ENCODE measurements at regions of chr11 and their contacts with region 1.

Region 1: GRCh38 chr11:128302425-128303186 is 284.8 kb downstream of the ETS1 start:
- DNase-seq: peak; percentile 81
- H3K4me3 Mint-ChIP-seq: peak overlapping the region; percentile 79
- H3K27ac Mint-ChIP-seq: peak overlapping the region; percentile 94
- H3K4me1 Mint-ChIP-seq: peaks cover 78% of the 10 kb centered on the region
- H3K27me3 Mint-ChIP-seq: no peaks in the 10 kb centered on the region

Region 2: GRCh38 chr11:128246364-128246801 is 56.2 kb before region 1 on chr11:
- CTCF ChIA-PET with region 1: no interaction called
- POLR2A ChIA-PET with region 1: no interaction called
- intact Hi-C with region 1: no loop called
- DNase-seq: no peak
- H3K4me3 Mint-ChIP-seq: no peak overlapping the region
- H3K27ac Mint-ChIP-seq: no peak overlapping the region
- H3K4me1 Mint-ChIP-seq: no peaks in the 10 kb centered on the region
- H3K27me3 Mint-ChIP-seq: peaks cover 4% of the 10 kb centered on the region

Region 3: GRCh38 chr11:128365044-128365443 is 62.4 kb after region 1 on chr11:
- CTCF ChIA-PET with region 1: no interaction called
- POLR2A ChIA-PET with region 1: no interaction called
- intact Hi-C with region 1: no loop called
- DNase-seq: no peak
- H3K4me3 Mint-ChIP-seq: no peak overlapping the region
- H3K27ac Mint-ChIP-seq: no peak overlapping the region
- H3K4me1 Mint-ChIP-seq: peaks cover 27% of the 10 kb centered on the region
- H3K27me3 Mint-ChIP-seq: no peaks in the 10 kb centered on the region

Region 4: GRCh38 chr11:128375961-128376360 is 73.4 kb after region 1 on chr11:
- CTCF ChIA-PET with region 1: no interaction called
- POLR2A ChIA-PET with region 1: no interaction called
- intact Hi-C with region 1: no loop called
- DNase-seq: no peak
- H3K4me3 Mint-ChIP-seq: no peak overlapping the region
- H3K27ac Mint-ChIP-seq: no peak overlapping the region
- H3K4me1 Mint-ChIP-seq: peaks cover 47% of the 10 kb centered on the region
- H3K27me3 Mint-ChIP-seq: no peaks in the 10 kb centered on the region

Region 5: DNA sequence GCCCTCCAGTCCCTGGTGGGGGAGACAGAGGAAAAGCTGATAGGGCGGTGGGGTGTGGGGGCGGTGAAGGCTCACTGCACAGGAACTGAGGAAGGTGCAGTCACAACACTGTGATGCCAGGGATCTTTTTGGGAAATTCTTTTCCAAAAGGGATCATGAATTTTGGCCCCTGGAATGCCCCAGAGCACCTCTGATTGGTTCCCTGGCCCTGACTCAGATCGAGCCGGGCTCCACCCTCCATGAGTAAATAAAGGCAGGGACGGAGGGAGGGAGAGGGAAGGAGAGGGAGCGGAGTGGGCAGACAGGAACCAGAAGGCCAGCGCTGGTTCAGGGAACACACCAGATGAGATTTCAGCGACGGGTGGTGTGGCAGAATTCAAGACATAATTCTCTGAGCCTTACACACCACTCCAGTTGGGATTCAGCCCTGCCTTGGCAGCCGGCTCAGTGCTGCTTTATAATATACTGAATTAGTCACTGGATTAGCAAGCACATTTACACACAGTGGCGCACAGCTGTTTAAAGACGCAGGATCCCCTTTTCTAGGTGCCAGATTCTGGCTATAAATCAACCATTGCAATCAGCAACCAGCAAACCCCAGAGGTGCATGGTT is 204.5 kb after region 1 on chr11:
- CTCF ChIA-PET with region 1: interaction called, 4 read pairs
- POLR2A ChIA-PET with region 1: interaction called, 12 read pairs
- intact Hi-C with region 1: no loop called
- DNase-seq: peak; percentile 74
- H3K4me3 Mint-ChIP-seq: peak overlapping the region; percentile 77
- H3K27ac Mint-ChIP-seq: peak overlapping the region; percentile 96
- H3K4me1 Mint-ChIP-seq: peaks cover 90% of the 10 kb centered on the region
- H3K27me3 Mint-ChIP-seq: no peaks in the 10 kb centered on the region

Measured in activated CD4-positive, alpha-beta memory T cell treated with anti-CD3 and anti-CD28 coated beads for 36 hours (primary cell).